ENCODE measurements at regions of chr7 and their contacts with region 1.

Region 1: DNA sequence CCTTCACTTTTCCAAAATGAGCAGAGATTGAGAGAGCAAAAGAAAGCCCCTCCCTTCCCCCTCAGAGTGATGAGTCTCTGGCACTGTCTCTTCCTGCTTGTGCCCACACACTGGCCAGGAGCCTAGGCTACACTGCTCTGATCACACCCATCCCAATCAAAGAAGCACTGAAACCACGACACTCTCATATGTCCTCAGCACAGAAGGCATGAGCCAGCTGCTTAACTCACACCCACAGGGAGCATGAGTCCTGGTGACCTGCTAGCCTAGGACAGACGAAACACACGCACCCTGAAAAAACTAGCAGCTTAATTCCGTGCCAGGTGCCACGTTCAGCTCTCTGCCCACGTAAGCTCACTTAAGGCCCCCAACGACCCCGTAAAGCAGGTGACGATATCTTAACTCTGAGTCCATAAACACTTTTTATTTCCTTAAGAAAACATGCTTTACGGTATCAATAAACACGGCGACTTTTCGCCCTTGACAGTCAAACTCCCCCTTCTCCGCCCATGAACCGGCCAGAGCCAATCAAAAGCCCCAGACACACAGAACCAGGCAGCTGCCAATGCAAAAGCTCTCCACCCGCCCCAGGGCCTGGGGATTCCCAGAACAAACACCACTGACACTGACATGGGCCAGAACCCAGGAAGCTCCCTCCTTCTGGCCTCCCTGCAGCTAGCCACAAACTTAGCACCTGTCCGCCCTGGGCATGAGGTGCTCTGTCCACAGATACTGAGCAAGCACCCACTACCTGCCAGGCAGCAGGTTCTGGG is 69.0 kb downstream of the TNRC18 start:
- DNase-seq: peak; percentile 46 to 70
- ATAC-seq: peak; percentile 86 to 88
- H3K4me3 ChIP-seq: peak overlapping the region in 3 of 4 donors; percentile 22 to 30 (median 25)
- H3K27ac ChIP-seq: peak overlapping the region; percentile 70 to 80 (median 73)
- H3K4me1 ChIP-seq: peaks cover 17 to 19% of the 10 kb centered on the region in 2 donors
- H3K27me3 ChIP-seq: no peaks in the 10 kb centered on the region
- CTCF ChIP-seq: no peak
- POLR2A ChIP-seq: no peak

Region 2: GRCh38 chr7:5396999-5397663 is 42.5 kb after region 1 on chr7:
- in situ Hi-C with region 1: no loop called
- intact Hi-C with region 1: loop called (anchors 5 kb)
- DNase-seq: peak; percentile 51 to 71
- ATAC-seq: peak; percentile 66 to 83
- H3K4me3 ChIP-seq: peak overlapping the region; percentile 32 to 47 (median 42)
- H3K27ac ChIP-seq: peak overlapping the region; percentile 70 to 81 (median 79)
- H3K4me1 ChIP-seq: peaks cover 0 to 12% of the 10 kb centered on the region in 2 donors
- H3K27me3 ChIP-seq: no peaks in the 10 kb centered on the region
- CTCF ChIP-seq: no peak
- POLR2A ChIP-seq: peak in 1 of 2 donors; percentile 30

Region 3: GRCh38 chr7:5494683-5495561 is 140.3 kb after region 1 on chr7:
- in situ Hi-C with region 1: no loop called
- intact Hi-C with region 1: no loop called
- DNase-seq: peak; percentile 62 to 76
- ATAC-seq: peak; percentile 71 to 75
- H3K4me3 ChIP-seq: peak overlapping the region; percentile 3 to 53 (median 41)
- H3K27ac ChIP-seq: peak overlapping the region; percentile 81 to 93 (median 86)
- H3K4me1 ChIP-seq: peaks cover 21 to 29% of the 10 kb centered on the region in 2 donors
- H3K27me3 ChIP-seq: no peaks in the 10 kb centered on the region
- CTCF ChIP-seq: peak; percentile 91 to 98 (median 96)
- POLR2A ChIP-seq: peak in 1 of 2 donors; percentile 34

Measured in gastrocnemius medialis (tissue), 4 donors.